Dendritic cell treated with granulocyte-macrophage colony-stimulating factor and Interleukin-4, amounts not matched to agents 40 ng/mL and 50 ng/mL, for 4 days (primary cell): ENCODE measurements at regions of chr12 and their contacts with region 1.

Region 1: GRCh38 chr12:100668945-100669536 is 95.6 kb downstream of the GAS2L3 start:
- H3K4me3 Mint-ChIP-seq: no peak overlapping the region
- H3K27ac Mint-ChIP-seq: no peak overlapping the region
- H3K4me1 Mint-ChIP-seq: peaks cover 8% of the 10 kb centered on the region
- H3K27me3 Mint-ChIP-seq: peaks cover 14% of the 10 kb centered on the region

Region 2: GRCh38 chr12:100234598-100235304 is 434.3 kb before region 1 on chr12:
- intact Hi-C with region 1: loop called (anchors 10 kb)
- H3K4me3 Mint-ChIP-seq: no peak overlapping the region
- H3K27ac Mint-ChIP-seq: no peak overlapping the region
- H3K4me1 Mint-ChIP-seq: peaks cover 5% of the 10 kb centered on the region
- H3K27me3 Mint-ChIP-seq: no peaks in the 10 kb centered on the region

Region 3: DNA sequence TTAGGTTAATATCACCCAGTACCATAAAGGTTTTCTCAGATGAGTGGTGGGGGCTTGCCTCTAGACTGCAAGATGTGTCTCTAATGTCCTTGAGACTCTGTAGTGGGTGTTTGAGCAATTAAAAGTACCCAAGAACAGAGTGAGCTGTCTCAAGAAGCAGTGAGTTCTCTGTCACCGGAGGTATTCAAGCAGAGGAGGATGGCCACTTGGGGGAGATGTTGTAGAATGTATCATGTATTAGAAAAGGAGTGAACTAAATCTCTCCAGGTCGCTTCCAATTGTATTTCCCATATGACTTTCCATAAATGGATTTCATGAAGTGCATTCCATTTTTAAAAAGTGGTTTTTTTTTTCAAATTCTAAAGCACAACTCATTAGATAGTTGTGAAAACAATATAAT is 277.2 kb before region 1 on chr12:
- intact Hi-C with region 1: loop called (anchors 5 kb)
- H3K4me3 Mint-ChIP-seq: no peak overlapping the region
- H3K27ac Mint-ChIP-seq: no peak overlapping the region
- H3K4me1 Mint-ChIP-seq: no peaks in the 10 kb centered on the region
- H3K27me3 Mint-ChIP-seq: no peaks in the 10 kb centered on the region

Region 4: DNA sequence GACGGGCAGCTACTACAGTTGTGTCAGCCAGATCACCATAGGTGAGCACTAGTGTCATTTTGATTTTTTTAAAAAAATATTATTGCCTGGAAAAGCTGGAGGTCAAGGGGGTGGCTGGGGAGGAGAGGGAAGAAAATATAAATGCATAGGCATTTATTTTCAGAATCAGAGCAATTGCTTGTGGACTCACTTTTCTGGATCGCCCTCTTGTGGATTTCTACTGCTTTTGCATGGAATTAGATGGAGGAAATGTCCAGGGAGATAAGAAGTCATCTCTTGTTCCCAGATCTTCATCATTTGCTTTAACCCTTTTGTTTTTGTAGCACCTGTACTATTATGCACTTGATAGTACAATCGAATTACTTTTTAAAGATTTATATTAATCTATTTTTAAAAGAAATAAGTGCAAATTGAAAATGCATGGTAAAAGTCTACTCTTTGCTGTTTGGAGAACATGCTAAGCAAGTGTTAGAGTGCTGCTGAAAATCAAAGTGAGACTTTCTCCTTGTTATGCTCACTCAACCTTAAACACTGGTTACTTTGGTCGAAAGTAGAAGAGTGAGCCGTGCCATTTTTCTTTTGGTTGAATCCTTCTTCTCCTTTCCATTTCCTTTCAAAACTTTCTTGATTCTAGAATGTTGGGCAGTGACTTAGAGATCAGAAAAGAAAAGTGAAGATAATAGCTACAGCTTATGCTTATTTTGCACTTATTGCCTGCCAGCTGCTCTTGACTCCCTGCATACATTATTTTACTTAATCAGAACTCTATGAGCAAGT is 65.0 kb after region 1 on chr12:
- intact Hi-C with region 1: loop called (anchors 5 kb)
- H3K4me3 Mint-ChIP-seq: no peak overlapping the region
- H3K27ac Mint-ChIP-seq: no peak overlapping the region
- H3K4me1 Mint-ChIP-seq: no peaks in the 10 kb centered on the region
- H3K27me3 Mint-ChIP-seq: peaks cover 22% of the 10 kb centered on the region

Region 5: GRCh38 chr12:100741084-100741711 is 72.2 kb after region 1 on chr12:
- intact Hi-C with region 1: loop called (anchors 2 kb)
- H3K4me3 Mint-ChIP-seq: no peak overlapping the region
- H3K27ac Mint-ChIP-seq: no peak overlapping the region
- H3K4me1 Mint-ChIP-seq: no peaks in the 10 kb centered on the region
- H3K27me3 Mint-ChIP-seq: peaks cover 2% of the 10 kb centered on the region